Activated CD4-positive, alpha-beta T cell treated with anti-CD3 and anti-CD28 coated beads, Interleukin-2, amount 10 ng/mL, durations not matched to agents 24 days and 14 days (primary cell): ENCODE measurements at regions of chr2 and their contacts with region 1.

Region 1: DNA sequence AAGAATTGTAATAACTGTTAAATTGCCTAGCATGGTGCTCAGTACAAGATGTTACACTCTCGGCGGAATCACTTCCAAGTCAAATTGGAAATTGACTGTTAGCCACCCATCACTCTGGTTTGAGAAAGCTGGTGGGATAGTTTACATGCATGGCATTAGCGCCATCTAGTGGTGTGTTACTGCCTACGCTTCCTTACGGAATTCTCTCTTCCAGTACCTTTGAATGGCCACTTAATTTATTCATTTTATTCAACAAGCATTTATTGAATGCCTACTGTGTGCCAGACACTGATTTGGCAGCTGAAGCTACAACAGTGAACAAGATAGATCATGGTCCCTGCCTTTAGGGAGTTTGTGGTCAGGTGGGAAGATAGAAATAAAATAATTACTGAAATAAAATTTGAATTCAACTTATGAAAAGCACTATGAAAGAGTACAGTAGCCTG is 171.2 kb downstream of the TMEM247 start:
- DNase-seq: peak; percentile 90
- H3K4me3 Mint-ChIP-seq: no peak overlapping the region
- H3K27ac Mint-ChIP-seq: no peak overlapping the region
- H3K4me1 Mint-ChIP-seq: no peaks in the 10 kb centered on the region
- H3K27me3 Mint-ChIP-seq: peaks cover 26% of the 10 kb centered on the region

Region 2: DNA sequence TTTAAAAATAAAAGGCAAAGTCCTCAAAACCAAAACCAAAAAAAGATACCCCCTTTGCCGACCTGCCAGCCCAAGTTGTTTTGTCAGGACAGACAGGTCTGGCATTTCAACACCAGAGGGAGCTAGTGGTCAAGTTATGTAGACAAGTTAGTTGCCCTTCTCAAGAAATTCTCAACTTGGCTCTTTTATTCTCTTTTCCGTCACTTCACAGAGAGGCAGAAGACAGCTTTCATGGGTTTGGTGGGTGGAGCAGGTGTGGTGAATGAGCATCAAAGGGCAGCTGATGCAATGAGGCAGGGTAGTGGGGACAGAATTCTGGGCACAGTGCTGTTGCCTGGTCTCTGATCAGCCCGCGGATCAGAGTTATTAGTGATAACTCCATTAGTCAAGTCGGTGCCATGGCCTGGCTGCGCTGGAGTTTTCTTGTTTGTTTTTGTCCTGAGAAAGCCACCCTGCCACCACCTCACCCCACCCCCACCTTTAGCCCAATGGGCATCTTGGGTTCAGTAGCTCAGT is 657.0 kb before region 1 on chr2:
- intact Hi-C with region 1: loop called (anchors 5 kb)
- DNase-seq: peak; percentile 89
- H3K4me3 Mint-ChIP-seq: no peak overlapping the region
- H3K27ac Mint-ChIP-seq: no peak overlapping the region
- H3K4me1 Mint-ChIP-seq: peaks cover 2% of the 10 kb centered on the region
- H3K27me3 Mint-ChIP-seq: peaks cover 2% of the 10 kb centered on the region

Region 3: DNA sequence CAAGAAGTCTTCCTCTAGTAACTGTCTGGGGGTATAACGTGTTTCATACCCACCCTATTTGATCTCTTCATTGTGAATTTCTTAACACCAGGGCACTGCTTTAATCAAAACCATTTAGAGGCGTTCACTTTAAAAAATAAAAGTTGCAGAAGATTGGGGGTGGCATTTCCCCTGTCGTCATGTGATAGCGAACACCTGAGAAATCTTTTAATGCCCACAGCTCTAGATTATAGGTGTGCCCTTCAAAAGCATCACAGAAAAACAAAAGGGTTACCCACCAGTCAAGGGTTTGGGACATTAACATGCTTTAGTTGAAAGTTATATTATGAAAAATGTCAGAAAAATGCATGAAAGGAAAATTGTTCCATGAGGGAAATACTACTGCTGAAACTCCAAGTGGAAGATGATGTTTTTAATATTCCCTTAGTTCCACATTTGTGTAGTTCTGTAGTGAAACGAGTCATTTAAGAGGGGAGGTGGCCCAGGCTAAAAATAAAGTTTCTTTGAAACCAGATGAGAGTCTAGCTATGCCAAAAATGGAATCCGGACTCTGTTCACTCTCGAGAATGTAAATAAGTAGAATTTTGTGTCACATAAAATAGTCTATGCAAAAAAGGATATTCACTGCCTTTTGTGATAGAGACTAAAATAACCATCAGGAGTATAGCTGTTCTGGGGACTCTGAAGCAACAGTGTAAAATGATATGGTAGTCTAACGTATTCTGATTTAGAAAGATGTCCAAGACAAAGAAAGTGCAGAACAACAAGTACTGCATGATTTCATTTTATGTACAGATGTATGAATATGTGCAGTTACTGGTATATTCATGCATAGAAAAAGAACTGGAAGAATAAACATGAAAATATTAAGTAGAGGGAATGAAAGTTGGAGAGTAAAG is 75.9 kb before region 1 on chr2:
- intact Hi-C with region 1: no loop called
- DNase-seq: no peak
- H3K4me3 Mint-ChIP-seq: no peak overlapping the region
- H3K27ac Mint-ChIP-seq: no peak overlapping the region
- H3K4me1 Mint-ChIP-seq: no peaks in the 10 kb centered on the region
- H3K27me3 Mint-ChIP-seq: no peaks in the 10 kb centered on the region

Region 4: DNA sequence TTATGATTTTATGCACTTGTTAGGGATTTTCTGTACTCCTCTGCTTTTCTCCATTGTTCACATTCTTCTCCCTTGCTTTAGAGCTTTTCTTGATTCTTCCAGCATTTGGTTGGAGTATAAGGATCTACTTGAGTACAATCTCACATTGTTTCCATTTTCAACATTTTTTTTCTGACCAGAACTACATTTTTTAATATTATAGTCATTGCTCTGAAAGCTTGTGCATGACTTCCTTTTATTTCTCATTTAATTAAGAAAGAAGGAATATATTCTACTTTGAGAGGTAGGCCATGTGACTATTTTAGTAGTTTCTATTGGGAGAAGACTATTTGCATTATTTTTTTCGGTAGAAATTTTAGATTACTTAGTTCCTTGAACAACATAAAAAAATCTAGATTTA is 29.2 kb after region 1 on chr2:
- intact Hi-C with region 1: no loop called
- DNase-seq: no peak
- H3K4me3 Mint-ChIP-seq: no peak overlapping the region
- H3K27ac Mint-ChIP-seq: no peak overlapping the region
- H3K4me1 Mint-ChIP-seq: peaks cover 2% of the 10 kb centered on the region
- H3K27me3 Mint-ChIP-seq: peaks cover 20% of the 10 kb centered on the region